Right cardiac atrium (tissue), 5 donors: ENCODE measurements at regions of chr21 and their contacts with region 1.

Region 1: DNA sequence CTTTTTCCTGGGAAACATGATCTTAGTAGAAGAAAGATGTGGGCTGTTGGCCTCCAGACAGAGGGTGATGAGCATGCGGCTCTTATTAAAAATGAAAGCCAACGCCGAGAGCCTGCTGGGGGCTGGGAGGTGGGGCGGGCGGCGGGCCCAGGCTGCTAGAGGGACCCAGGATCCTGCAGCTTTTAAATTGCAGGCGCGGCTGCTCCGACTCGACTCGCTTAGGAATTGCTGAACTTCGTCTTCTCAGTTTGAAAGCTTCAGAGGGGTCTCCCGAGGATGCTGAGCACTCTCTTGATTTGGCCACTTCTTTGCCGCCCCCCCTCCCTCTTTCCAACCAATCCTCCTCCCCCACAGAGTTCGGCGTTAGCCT is 1.2 kb downstream of the AGPAT3 start:
- DNase-seq: peak in 2 of 3 donors; percentile 47 to 76
- ATAC-seq: peak; percentile 52 to 57
- H3K4me3 ChIP-seq: peak overlapping the region; percentile 93
- H3K27ac ChIP-seq: peak overlapping the region; percentile 6
- H3K4me1 ChIP-seq: peaks cover 7% of the 10 kb centered on the region
- H3K27me3 ChIP-seq: no peaks in the 10 kb centered on the region

Region 2: DNA sequence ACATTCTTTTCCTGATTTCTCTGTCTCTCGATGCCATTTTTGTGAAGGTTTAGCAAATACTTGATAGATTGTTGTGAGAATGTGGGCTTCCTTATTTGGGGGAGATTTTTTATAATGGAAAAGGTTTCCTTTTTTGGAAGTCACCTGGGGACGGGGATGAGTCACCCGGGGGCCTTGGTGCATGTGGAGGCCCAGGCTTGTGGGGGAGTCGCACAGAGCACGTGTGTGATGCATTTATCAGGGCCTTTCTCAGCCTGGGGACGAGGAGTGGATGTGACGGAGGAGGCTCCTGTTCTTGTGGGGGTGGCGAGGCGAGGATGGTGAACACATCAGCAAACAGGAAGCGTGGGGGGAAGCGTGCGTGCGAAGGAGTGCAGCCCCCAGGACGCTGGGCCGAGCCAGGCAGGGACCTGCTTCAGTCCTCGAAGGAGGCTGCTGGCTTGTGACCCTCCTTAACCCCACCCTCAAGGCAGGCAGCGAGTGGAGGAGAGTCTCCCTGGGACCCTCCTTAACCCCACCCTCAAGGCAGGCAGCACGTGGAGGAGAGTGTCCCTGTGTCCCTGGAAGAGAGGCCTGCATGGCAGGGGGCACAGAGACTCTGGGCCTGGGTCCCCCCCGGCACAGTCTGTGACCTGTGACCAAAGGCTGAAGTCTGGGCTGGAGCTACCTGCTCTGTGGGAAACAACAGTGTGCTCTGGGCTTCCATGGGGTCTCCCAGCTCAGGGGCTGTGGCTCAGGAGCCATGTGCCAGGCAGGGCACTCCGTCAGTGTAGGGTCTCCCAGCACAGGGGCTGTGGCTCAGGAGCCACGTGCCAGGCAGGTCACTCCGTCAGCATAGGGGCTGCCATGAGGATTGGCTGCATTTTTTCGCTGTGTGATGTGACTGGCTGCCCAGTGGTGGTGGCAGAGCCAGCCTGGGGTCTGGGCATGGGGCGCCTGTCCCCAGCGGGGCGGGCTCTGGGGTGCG is 56.0 kb after region 1 on chr21:
- intact Hi-C with region 1: loop called in 2 of 4 experiments (anchors 5 to 10 kb)
- DNase-seq: peak in 2 of 3 donors; percentile 53 to 68
- ATAC-seq: peak in 1 of 2 donors; percentile 1
- H3K4me3 ChIP-seq: no peak overlapping the region
- H3K27ac ChIP-seq: no peak overlapping the region
- H3K4me1 ChIP-seq: peaks cover 19% of the 10 kb centered on the region
- H3K27me3 ChIP-seq: no peaks in the 10 kb centered on the region

Region 3: GRCh38 chr21:43929217-43930025 is 63.2 kb after region 1 on chr21:
- intact Hi-C with region 1: loop called in 3 of 4 experiments (anchors 5 to 10 kb)
- DNase-seq: peak; percentile 66 to 91 (median 87)
- ATAC-seq: peak; percentile 88 to 89
- H3K4me3 ChIP-seq: no peak overlapping the region
- H3K27ac ChIP-seq: peak overlapping the region; percentile 76
- H3K4me1 ChIP-seq: peaks cover 11% of the 10 kb centered on the region
- H3K27me3 ChIP-seq: no peaks in the 10 kb centered on the region

Region 4: GRCh38 chr21:43938751-43939442 is 72.7 kb after region 1 on chr21:
- intact Hi-C with region 1: loop called in 1 of 4 experiments (anchors 10 kb)
- DNase-seq: peak; percentile 71 to 91 (median 91)
- ATAC-seq: peak; percentile 82
- H3K4me3 ChIP-seq: no peak overlapping the region
- H3K27ac ChIP-seq: peak overlapping the region; percentile 18
- H3K4me1 ChIP-seq: peaks cover 4% of the 10 kb centered on the region
- H3K27me3 ChIP-seq: no peaks in the 10 kb centered on the region